ENCODE measurements at regions of chr10 and their contacts with region 1.

Region 1: DNA sequence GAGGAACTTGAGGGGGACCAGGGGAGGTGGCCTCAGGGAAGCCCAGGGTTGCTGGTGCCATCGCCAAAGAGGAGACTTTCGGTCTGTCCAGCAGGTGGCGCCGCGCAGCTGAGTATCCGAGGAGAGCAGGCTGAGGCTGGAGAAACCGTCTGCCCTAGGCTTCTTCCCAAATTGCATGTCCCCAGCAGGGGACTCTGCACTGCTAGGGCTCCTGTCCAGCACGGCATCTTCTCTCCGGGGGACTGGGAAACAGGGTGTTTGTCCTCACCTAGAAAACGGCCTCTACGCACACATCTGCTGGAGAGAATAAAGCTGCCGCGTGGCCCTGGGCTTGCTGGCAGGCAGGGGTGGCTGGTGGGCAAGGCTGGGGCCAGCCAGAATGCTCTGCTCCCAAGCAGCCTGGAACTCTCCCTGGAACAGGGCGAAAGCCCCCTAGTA is 161.9 kb downstream of the SH2D4B start:
- DNase-seq: no peak
- H3K4me3 ChIP-seq: no peak overlapping the region
- CTCF ChIP-seq: peak; percentile 91

Region 2: GRCh38 chr10:80686734-80687475 is 12.7 kb before region 1 on chr10:
- CTCF ChIA-PET with region 1: interaction called, 12 read pairs
- POLR2A ChIA-PET with region 1: no interaction called
- DNase-seq: no peak
- H3K4me3 ChIP-seq: no peak overlapping the region
- CTCF ChIP-seq: no peak

Region 3: DNA sequence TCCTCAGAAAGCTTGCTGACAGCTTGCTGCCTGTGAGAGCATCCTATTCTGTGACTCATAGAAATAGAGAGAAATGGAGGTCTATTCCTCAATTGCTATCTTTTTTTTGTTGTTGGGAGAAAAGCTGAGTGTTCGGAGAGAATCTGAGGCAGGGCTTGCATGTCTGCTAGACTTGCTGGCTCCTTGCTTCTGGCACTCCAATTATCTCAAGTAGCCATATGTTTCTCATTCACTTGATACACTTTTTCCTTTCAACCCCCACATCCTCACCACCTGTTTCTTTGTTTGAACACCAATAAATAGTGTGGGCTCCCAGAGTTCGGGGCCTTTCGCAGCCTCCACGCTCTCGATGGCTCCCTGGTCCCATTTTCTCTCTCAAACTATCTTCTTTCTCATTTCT is 10.2 kb after region 1 on chr10:
- CTCF ChIA-PET with region 1: interaction called, 12 read pairs
- POLR2A ChIA-PET with region 1: no interaction called
- DNase-seq: no peak
- H3K4me3 ChIP-seq: no peak overlapping the region
- CTCF ChIP-seq: no peak